BJ (cell line): ENCODE measurements at regions of chr6 and their contacts with region 1.

Region 1: GRCh38 chr6:17086469-17086868 is 15.4 kb upstream of the STMND1 start:
- DNase-seq: peak; percentile 40
- H3K4me3 ChIP-seq: no peak overlapping the region
- H3K27me3 ChIP-seq: no peaks in the 10 kb centered on the region; the same call in 1 of the 2 replicates
- CTCF ChIP-seq: peak; percentile 66

Region 2: GRCh38 chr6:16651871-16652270 is 434.6 kb before region 1 on chr6:
- CTCF ChIA-PET with region 1: no interaction called
- POLR2A ChIA-PET with region 1: interaction called, 11 read pairs
- DNase-seq: no peak
- H3K4me3 ChIP-seq: no peak overlapping the region
- H3K27me3 ChIP-seq: no peaks in the 10 kb centered on the region
- CTCF ChIP-seq: no peak

Region 3: GRCh38 chr6:17022604-17023003 is 63.9 kb before region 1 on chr6:
- CTCF ChIA-PET with region 1: no interaction called
- POLR2A ChIA-PET with region 1: no interaction called
- DNase-seq: no peak
- H3K4me3 ChIP-seq: no peak overlapping the region
- H3K27me3 ChIP-seq: no peaks in the 10 kb centered on the region
- CTCF ChIP-seq: no peak

Region 4: DNA sequence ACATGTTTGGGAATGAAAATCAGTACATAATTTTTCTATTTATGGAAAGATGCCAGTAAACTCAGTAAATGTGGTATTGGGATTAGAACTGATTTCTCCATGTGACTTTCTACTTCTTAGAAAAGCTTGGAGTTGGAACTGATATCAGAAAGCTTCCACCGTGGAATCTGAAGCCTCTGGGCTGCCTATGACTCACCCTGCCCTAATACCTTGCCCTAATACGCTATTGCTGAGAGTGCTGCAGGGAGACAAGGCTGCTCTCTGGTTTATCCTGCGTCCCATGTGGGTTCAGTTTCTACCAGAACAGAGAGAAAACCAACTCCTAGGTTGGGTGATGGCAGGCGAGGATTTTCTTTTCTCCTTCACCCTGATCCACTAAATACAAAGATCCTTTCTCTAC is 12.1 kb after region 1 on chr6:
- CTCF ChIA-PET with region 1: interaction called, 10 read pairs
- POLR2A ChIA-PET with region 1: no interaction called
- DNase-seq: no peak
- H3K4me3 ChIP-seq: no peak overlapping the region
- H3K27me3 ChIP-seq: peaks cover 5% of the 10 kb centered on the region; the same call in 1 of the 2 replicates
- CTCF ChIP-seq: no peak

Region 5: DNA sequence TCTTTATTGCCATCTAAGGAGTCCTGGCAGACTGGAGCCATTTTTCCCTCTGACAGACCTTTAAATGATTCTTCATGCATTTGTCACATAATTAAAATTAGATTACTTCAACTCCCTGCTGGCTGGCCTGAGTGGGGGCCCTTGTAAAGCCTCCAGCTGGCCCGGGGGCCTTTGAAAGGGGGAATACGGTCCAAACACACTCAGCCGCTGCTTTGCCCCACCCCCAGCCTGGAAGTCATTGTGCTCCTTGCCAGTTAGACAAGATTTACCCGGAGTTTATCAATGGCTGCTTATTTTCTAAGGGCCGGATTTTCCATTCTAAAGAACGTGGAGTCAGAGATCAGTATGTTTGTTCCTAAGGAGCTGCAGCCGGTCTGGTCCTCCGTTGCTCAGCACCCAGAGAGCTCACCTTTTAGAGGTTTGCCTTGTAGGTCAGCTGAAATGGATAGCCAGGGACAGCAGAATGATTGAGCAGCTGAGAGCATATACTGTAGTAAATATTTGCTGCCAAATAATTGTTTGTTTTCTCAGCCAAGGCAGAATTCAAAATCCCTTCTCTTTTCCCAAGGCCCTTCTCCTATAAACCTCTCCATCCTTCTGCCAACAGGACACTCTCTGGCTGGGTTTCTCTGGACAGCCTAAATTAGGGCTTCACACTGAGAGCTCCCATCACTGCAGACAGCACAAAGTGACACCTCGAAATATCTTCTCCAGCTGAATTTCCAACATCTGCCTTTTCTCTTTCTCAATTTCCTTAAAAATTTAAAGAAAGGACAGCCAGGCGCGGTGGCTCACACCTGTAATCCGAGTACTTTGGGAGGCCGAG is 126.3 kb after region 1 on chr6:
- CTCF ChIA-PET with region 1: no interaction called
- POLR2A ChIA-PET with region 1: no interaction called
- DNase-seq: no peak
- H3K4me3 ChIP-seq: no peak overlapping the region
- H3K27me3 ChIP-seq: no peaks in the 10 kb centered on the region
- CTCF ChIP-seq: no peak